Breast epithelium (tissue), 4 donors: ENCODE measurements at regions of chr7 and their contacts with region 1.

Region 1: GRCh38 chr7:105017657-105018365 is 3.8 kb downstream of the KMT2E start:
- DNase-seq: no peak
- H3K4me3 ChIP-seq: peak overlapping the region; percentile 51 to 98 (median 92)
- H3K27ac ChIP-seq: peak overlapping the region; percentile 70 to 100
- H3K4me1 ChIP-seq: peaks cover 0 to 9% of the 10 kb centered on the region in 2 donors
- H3K27me3 ChIP-seq: no peaks in the 10 kb centered on the region
- CTCF ChIP-seq: no peak
- POLR2A ChIP-seq: no peak

Region 2: DNA sequence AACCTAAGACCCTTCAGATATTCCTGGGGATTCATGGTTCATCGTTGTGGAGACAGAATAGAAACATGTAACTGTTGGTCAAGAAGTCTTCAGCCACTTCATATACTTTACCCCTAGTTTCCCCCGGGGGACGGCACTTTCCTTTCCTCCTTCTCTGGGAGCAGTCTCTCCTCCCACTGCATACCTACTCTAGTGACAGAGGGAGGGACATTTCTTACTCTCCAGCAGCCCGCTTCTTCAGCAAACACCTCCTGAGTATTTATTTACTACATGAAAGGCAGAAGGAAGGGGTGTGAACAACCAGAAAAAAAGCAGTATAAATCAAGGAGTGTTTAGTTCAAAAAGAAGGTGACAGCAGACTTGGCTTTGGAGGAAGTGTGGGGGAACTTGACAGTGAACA is 620.4 kb before region 1 on chr7:
- intact Hi-C with region 1: no loop called
- DNase-seq: no peak
- H3K4me3 ChIP-seq: no peak overlapping the region
- H3K27ac ChIP-seq: no peak overlapping the region
- H3K4me1 ChIP-seq: no peaks in the 10 kb centered on the region
- H3K27me3 ChIP-seq: peaks cover 0 to 8% of the 10 kb centered on the region in 2 donors
- CTCF ChIP-seq: no peak
- POLR2A ChIP-seq: no peak

Region 3: DNA sequence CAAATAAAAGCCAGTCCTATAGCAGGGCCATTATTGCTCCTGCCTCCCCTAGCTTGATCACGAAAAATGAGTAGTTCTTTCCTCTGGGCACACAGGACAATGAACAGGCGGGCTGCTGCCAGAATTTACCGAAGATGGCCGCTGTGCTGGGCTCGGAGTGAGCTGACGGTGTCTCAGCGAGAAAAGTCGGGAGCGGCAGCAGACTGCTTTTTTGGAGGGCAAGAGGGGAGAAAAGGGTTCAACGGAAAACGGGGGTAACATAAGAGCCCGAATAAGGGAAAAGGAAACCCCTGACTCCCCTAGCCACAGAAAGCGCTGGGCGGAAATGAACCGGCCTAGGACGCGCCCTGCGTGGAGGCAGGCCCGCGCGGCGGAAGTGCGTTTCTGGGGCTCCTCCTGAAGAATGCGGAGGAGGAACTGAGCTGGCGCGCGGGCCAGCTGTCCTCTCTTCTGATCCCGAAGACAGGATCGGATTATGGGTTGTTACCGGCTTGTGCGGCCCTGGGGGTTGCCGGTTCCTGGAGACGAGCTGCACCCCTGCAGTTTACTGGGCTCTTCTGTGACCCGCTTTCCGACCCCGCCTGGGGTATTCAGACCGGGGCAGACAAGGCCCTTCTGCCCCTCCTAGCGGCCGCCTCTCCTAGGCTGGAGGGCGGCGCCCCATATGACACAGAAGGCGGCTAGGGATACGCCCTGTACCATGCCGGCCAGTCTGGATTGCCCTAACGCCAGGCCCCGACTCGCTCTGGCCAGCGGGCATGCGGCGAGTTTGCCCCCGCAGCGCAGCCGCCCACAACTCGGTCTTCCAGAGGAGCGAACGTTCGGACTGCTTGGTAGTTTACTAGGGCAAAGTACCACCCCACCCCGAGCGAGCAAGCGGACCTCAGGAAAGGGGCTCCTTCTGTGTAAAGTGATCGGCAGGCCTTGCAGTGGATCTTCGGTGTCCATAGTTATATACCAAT is 34.0 kb before region 1 on chr7:
- intact Hi-C with region 1: loop called (anchors 1 kb)
- DNase-seq: peak; percentile 80 to 84
- H3K4me3 ChIP-seq: peak overlapping the region; percentile 55 to 83 (median 70)
- H3K27ac ChIP-seq: peak overlapping the region; percentile 99 to 100
- H3K4me1 ChIP-seq: peaks cover 0 to 26% of the 10 kb centered on the region in 2 donors
- H3K27me3 ChIP-seq: no peaks in the 10 kb centered on the region
- CTCF ChIP-seq: peak; percentile 52 to 71 (median 57)
- POLR2A ChIP-seq: peak; percentile 49

Region 4: DNA sequence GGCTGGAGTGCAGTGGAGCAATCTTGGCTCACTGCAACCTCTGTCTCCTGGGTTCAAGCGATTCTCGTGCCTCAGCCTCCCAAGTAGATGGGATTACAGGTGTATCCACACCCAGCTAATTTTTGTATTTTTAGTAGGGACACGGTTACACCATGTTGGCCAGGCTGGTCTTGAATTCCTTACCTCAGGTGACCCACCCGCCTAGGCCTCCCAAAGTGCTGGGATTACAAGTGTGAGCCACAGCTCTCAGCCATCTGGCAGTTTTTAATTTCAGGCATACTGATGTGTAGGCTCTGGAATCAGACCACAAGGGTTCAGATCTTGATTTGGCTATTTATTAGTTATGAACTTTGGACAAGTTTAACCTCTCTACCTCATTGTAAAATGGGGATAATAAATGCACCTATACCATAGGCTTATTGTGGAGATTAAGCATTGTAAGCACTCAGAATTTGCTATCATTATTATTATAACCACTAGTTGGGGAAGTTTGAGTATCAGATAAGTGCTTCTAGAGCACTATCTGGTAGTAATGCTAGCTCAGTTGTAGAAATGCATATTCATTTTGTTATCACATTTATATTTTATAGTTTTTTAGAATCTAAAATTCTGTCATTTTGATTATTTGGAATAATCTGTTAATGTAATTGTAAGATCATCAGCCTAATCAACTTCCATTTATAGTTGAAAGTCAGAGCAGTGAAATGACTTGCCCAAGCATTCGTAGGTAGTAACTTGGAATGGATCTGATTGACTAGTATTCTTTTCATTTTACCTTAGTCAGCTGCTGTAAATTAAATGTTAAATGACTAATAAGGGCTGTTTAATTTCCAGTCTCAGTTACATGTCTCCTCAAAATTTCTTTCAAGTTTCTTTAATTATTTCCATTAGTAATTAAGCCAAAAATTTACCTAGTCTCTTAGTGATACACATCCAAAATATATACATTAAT is 18.7 kb after region 1 on chr7:
- intact Hi-C with region 1: no loop called
- DNase-seq: no peak
- H3K4me3 ChIP-seq: no peak overlapping the region
- H3K27ac ChIP-seq: no peak overlapping the region
- H3K4me1 ChIP-seq: no peaks in the 10 kb centered on the region
- H3K27me3 ChIP-seq: no peaks in the 10 kb centered on the region
- CTCF ChIP-seq: no peak
- POLR2A ChIP-seq: no peak